A673 (cell line): ENCODE measurements at regions of chr5 and their contacts with region 1.

Region 1: GRCh38 chr5:30676223-30676840 is 517.2 kb upstream of the CDH6 start:
- DNase-seq: no peak
- H3K4me3 ChIP-seq: no peak overlapping the region
- H3K27ac ChIP-seq: no peak overlapping the region
- H3K4me1 ChIP-seq: no peaks in the 10 kb centered on the region
- H3K27me3 ChIP-seq: no peaks in the 10 kb centered on the region
- CTCF ChIP-seq: no peak

Region 2: GRCh38 chr5:29143266-29143665 is 1533.1 kb before region 1 on chr5:
- CTCF ChIA-PET with region 1: no interaction called
- POLR2A ChIA-PET with region 1: no interaction called
- intact Hi-C with region 1: no loop called
- DNase-seq: peak; percentile 49
- H3K4me3 ChIP-seq: no peak overlapping the region
- H3K27ac ChIP-seq: no peak overlapping the region
- H3K4me1 ChIP-seq: peaks cover 3% of the 10 kb centered on the region
- H3K27me3 ChIP-seq: no peaks in the 10 kb centered on the region
- CTCF ChIP-seq: no peak

Region 3: GRCh38 chr5:30239331-30240022 is 436.9 kb before region 1 on chr5:
- CTCF ChIA-PET with region 1: no interaction called
- POLR2A ChIA-PET with region 1: no interaction called
- intact Hi-C with region 1: no loop called
- DNase-seq: no peak
- H3K4me3 ChIP-seq: no peak overlapping the region
- H3K27ac ChIP-seq: no peak overlapping the region
- H3K4me1 ChIP-seq: no peaks in the 10 kb centered on the region
- H3K27me3 ChIP-seq: no peaks in the 10 kb centered on the region
- CTCF ChIP-seq: no peak

Region 4: DNA sequence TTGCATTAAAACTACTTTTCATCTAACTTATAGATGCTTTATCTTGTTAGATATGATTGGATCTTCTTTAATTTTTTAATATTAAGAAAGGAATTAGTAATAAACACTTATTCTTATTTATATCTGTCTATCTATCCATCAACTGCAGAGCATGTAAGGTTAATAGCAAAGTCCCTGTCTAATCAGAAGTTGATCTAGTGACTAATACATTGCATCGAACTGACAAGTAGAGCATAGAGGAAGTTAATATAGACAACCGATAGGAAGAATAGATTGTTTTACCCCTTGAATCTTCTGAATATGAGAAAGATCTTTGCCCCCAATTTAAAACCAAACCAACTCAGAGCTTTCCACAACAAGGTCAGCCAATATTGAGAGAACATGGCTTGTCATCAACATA is 344.8 kb before region 1 on chr5:
- CTCF ChIA-PET with region 1: no interaction called
- POLR2A ChIA-PET with region 1: no interaction called
- intact Hi-C with region 1: no loop called
- DNase-seq: no peak
- H3K4me3 ChIP-seq: no peak overlapping the region
- H3K27ac ChIP-seq: no peak overlapping the region
- H3K4me1 ChIP-seq: peaks cover 10% of the 10 kb centered on the region
- H3K27me3 ChIP-seq: no peaks in the 10 kb centered on the region
- CTCF ChIP-seq: no peak

Region 5: GRCh38 chr5:30693326-30693725 is 17.0 kb after region 1 on chr5:
- CTCF ChIA-PET with region 1: no interaction called
- POLR2A ChIA-PET with region 1: interaction called, 16 read pairs
- intact Hi-C with region 1: no loop called
- DNase-seq: no peak
- H3K4me3 ChIP-seq: no peak overlapping the region
- H3K27ac ChIP-seq: no peak overlapping the region
- H3K4me1 ChIP-seq: no peaks in the 10 kb centered on the region
- H3K27me3 ChIP-seq: no peaks in the 10 kb centered on the region
- CTCF ChIP-seq: no peak